Activated T-helper 2 cell treated with anti-CD3 and anti-CD28 coated beads, Interferon-gamma antibody, Interleukin-2, Interleukin-4, amounts not matched to agents 10 μg/mL and 5 μg/mL and 100 μg/mL, durations not matched to agents 14 hours and 24 hours and 36 hours (primary cell): ENCODE measurements at regions of chr2 and their contacts with region 1.

Region 1: GRCh38 chr2:85032621-85033020 is 61.7 kb downstream of the KCMF1 start:
- DNase-seq: no peak
- H3K4me3 Mint-ChIP-seq: no peak overlapping the region
- H3K27ac Mint-ChIP-seq: no peak overlapping the region
- H3K4me1 Mint-ChIP-seq: peaks cover 10% of the 10 kb centered on the region
- H3K27me3 Mint-ChIP-seq: no peaks in the 10 kb centered on the region

Region 2: GRCh38 chr2:85017411-85018048 is 15.1 kb before region 1 on chr2:
- intact Hi-C with region 1: no loop called
- DNase-seq: no peak
- H3K4me3 Mint-ChIP-seq: no peak overlapping the region
- H3K27ac Mint-ChIP-seq: peak overlapping the region; percentile 69
- H3K4me1 Mint-ChIP-seq: peaks cover 38% of the 10 kb centered on the region
- H3K27me3 Mint-ChIP-seq: no peaks in the 10 kb centered on the region

Region 3: DNA sequence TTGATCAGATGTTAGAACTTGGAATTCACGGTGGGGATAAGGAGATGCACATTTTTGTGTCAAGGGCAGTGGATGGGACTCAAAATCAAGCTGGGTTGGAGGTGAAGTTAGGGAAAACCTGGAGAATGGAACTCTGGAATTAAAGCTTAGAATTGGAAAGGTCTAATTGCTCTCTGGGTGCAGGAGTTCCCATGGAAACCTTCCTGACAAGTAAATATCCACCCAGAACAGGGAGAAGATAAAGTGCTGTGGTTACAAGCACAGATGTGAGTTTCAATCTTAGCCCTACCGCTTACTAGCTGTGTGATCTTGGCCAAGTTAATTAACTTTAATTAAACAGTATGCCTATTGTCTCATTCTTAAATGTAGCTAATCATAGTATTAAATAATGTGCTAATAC is 29.3 kb after region 1 on chr2:
- intact Hi-C with region 1: loop called (anchors 1 kb)
- DNase-seq: no peak
- H3K4me3 Mint-ChIP-seq: no peak overlapping the region
- H3K27ac Mint-ChIP-seq: no peak overlapping the region
- H3K4me1 Mint-ChIP-seq: peaks cover 11% of the 10 kb centered on the region
- H3K27me3 Mint-ChIP-seq: peaks cover 23% of the 10 kb centered on the region